CD8-positive, alpha-beta T cell (primary cell): ENCODE measurements at regions of chr7 and their contacts with region 1.

Region 1: GRCh38 chr7:121366852-121367431 is 29.2 kb downstream of the FAM3C start:
- DNase-seq: peak in 3 of 9 experiments; percentile 24 to 70 (median 64)
- ATAC-seq: peak; percentile 57
- H3K4me3 ChIP-seq: no peak overlapping the region
- H3K4me3 Mint-ChIP-seq: no peak overlapping the region
- H3K27ac ChIP-seq: no peak overlapping the region
- H3K27ac Mint-ChIP-seq: peak overlapping the region; percentile 41
- H3K4me1 ChIP-seq: no peaks in the 10 kb centered on the region
- H3K4me1 Mint-ChIP-seq: peaks cover 22% of the 10 kb centered on the region
- H3K27me3 ChIP-seq: no peaks in the 10 kb centered on the region
- H3K27me3 Mint-ChIP-seq: no peaks in the 10 kb centered on the region
- CTCF ChIP-seq: peak; percentile 84

Region 2: DNA sequence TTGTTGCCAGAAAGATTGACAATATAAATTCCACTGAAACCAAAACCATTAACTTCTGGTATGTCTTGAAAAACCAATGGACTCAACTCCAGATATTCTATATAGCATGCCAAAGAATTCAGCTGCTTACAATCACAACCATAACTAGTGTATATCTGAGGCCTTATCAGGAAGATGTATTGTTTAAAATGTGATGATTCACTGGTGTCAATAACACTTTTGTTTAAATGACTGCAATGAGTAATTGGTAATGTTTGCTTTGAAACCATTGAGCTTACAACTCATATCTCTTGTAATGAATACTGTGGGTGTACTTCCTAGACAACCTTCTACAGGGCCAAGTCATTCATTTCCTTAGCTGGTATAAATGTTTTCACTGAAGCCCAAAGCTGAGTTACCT is 1821.8 kb before region 1 on chr7:
- CTCF ChIA-PET with region 1: no interaction called
- POLR2A ChIA-PET with region 1: no interaction called
- intact Hi-C with region 1: no loop called
- DNase-seq: no peak
- ATAC-seq: no peak
- H3K4me3 ChIP-seq: no peak overlapping the region
- H3K4me3 Mint-ChIP-seq: no peak overlapping the region
- H3K27ac ChIP-seq: no peak overlapping the region
- H3K27ac Mint-ChIP-seq: no peak overlapping the region
- H3K4me1 ChIP-seq: no peaks in the 10 kb centered on the region
- H3K4me1 Mint-ChIP-seq: no peaks in the 10 kb centered on the region
- H3K27me3 ChIP-seq: no peaks in the 10 kb centered on the region
- H3K27me3 Mint-ChIP-seq: no peaks in the 10 kb centered on the region
- CTCF ChIP-seq: no peak

Region 3: DNA sequence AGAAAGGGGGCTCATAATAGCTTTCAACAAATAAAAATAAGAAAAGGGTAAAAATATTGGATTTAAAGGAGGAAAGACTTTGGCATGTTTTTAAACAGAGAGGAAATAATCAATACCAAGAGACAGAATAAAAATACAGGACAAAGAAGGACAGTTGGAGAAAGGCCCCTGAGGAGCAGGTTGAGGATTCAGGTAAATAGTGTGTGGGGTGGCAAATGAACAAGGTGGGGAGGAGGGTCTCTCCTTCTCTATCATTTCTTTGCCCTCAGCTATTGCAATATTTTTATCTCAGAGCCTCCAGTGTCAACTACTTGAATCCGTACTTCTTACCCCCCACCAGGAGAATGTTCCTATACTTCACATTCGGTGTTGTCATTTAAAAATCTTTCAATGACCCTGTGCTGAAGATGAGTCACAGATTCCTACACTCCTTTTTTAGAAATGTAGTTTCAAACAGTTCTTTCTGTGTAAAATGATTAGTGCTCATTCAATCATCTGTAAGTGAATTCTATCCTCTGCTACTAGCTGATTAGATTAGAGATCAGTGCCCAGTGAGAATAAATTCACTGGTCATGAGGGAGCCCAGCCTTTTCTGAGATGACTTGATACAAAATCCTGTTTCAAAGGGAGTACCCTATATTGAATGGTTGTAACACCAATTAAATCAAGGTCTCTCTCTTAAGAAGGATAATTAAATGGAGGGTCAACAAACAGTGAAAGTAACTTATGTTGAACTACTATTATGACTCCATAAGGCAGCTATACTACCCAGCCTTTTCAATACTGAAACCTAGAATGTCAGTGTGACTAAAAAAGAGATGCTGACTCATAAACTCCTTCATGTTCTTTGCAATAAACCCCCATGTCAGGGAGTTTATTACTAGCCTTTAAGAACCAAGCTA is 88.6 kb before region 1 on chr7:
- CTCF ChIA-PET with region 1: no interaction called
- POLR2A ChIA-PET with region 1: no interaction called
- intact Hi-C with region 1: no loop called
- DNase-seq: no peak
- ATAC-seq: no peak
- H3K4me3 ChIP-seq: no peak overlapping the region
- H3K4me3 Mint-ChIP-seq: no peak overlapping the region
- H3K27ac ChIP-seq: no peak overlapping the region
- H3K27ac Mint-ChIP-seq: no peak overlapping the region
- H3K4me1 ChIP-seq: no peaks in the 10 kb centered on the region
- H3K4me1 Mint-ChIP-seq: no peaks in the 10 kb centered on the region
- H3K27me3 ChIP-seq: no peaks in the 10 kb centered on the region
- H3K27me3 Mint-ChIP-seq: peaks cover 12% of the 10 kb centered on the region
- CTCF ChIP-seq: no peak

Region 4: GRCh38 chr7:121379930-121380329 is 13.0 kb after region 1 on chr7:
- CTCF ChIA-PET with region 1: interaction called, 12 read pairs
- POLR2A ChIA-PET with region 1: interaction called, 5 read pairs
- intact Hi-C with region 1: loop called in 1 of 2 experiments (anchors 2 kb)
- DNase-seq: no peak
- ATAC-seq: no peak
- H3K4me3 ChIP-seq: no peak overlapping the region
- H3K4me3 Mint-ChIP-seq: no peak overlapping the region
- H3K27ac ChIP-seq: no peak overlapping the region
- H3K27ac Mint-ChIP-seq: no peak overlapping the region
- H3K4me1 ChIP-seq: peaks cover 16% of the 10 kb centered on the region
- H3K4me1 Mint-ChIP-seq: peaks cover 28% of the 10 kb centered on the region
- H3K27me3 ChIP-seq: no peaks in the 10 kb centered on the region
- H3K27me3 Mint-ChIP-seq: no peaks in the 10 kb centered on the region
- CTCF ChIP-seq: no peak

Region 5: GRCh38 chr7:121395961-121396757 is 29.2 kb after region 1 on chr7 and contains the start of gene FAM3C:
- CTCF ChIA-PET with region 1: interaction called, 41 read pairs
- POLR2A ChIA-PET with region 1: interaction called, 4 read pairs
- intact Hi-C with region 1: loop called (anchors 1 to 2 kb)
- DNase-seq: peak; percentile 52 to 89 (median 73)
- ATAC-seq: peak; percentile 76
- H3K4me3 ChIP-seq: peak within 1 kb of the TSS; percentile 55 to 78
- H3K4me3 Mint-ChIP-seq: peak within 1 kb of the TSS; percentile 88
- H3K27ac ChIP-seq: peak within 1 kb of the TSS; percentile 59 to 61
- H3K27ac Mint-ChIP-seq: peak within 1 kb of the TSS; percentile 88
- H3K4me1 ChIP-seq: peaks cover 16% of the 10 kb centered on the region
- H3K4me1 Mint-ChIP-seq: peaks cover 37% of the 10 kb centered on the region
- H3K27me3 ChIP-seq: no peaks in the 10 kb centered on the region
- H3K27me3 Mint-ChIP-seq: no peaks in the 10 kb centered on the region
- CTCF ChIP-seq: peak; percentile 83
- total RNA-seq, gene FAM3C: 11.7 to 11.9 TPM

Region 6: DNA sequence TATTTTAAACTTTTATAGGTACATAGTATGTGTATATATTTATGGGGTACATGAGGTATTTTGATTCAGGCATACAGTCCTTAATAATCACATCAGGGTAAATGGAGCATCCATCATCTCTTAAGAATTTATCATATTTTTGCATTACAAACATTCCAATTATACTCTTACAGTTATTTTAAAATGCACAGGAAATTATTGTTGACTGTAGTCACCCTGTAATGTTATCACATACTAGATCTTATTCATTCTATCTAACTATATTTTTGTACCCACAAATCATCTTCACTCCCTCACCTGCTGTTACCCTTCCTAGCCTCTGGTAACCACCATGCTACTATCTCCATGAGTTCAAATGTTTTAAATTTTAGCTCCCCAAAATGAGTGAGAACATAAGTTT is 85.4 kb after region 1 on chr7:
- CTCF ChIA-PET with region 1: no interaction called
- POLR2A ChIA-PET with region 1: no interaction called
- intact Hi-C with region 1: no loop called
- DNase-seq: no peak
- ATAC-seq: no peak
- H3K4me3 ChIP-seq: no peak overlapping the region
- H3K4me3 Mint-ChIP-seq: no peak overlapping the region
- H3K27ac ChIP-seq: no peak overlapping the region
- H3K27ac Mint-ChIP-seq: no peak overlapping the region
- H3K4me1 ChIP-seq: no peaks in the 10 kb centered on the region
- H3K4me1 Mint-ChIP-seq: no peaks in the 10 kb centered on the region
- H3K27me3 ChIP-seq: no peaks in the 10 kb centered on the region
- H3K27me3 Mint-ChIP-seq: no peaks in the 10 kb centered on the region
- CTCF ChIP-seq: no peak

Region 7: GRCh38 chr7:121504478-121504877 is 137.5 kb after region 1 on chr7:
- CTCF ChIA-PET with region 1: interaction called, 35 read pairs
- POLR2A ChIA-PET with region 1: no interaction called
- intact Hi-C with region 1: loop called in 1 of 2 experiments (anchors 1 kb)
- DNase-seq: no peak
- ATAC-seq: no peak
- H3K4me3 ChIP-seq: no peak overlapping the region
- H3K4me3 Mint-ChIP-seq: no peak overlapping the region
- H3K27ac ChIP-seq: no peak overlapping the region
- H3K27ac Mint-ChIP-seq: no peak overlapping the region
- H3K4me1 ChIP-seq: no peaks in the 10 kb centered on the region
- H3K4me1 Mint-ChIP-seq: no peaks in the 10 kb centered on the region
- H3K27me3 ChIP-seq: no peaks in the 10 kb centered on the region
- H3K27me3 Mint-ChIP-seq: no peaks in the 10 kb centered on the region
- CTCF ChIP-seq: no peak

Region 8: DNA sequence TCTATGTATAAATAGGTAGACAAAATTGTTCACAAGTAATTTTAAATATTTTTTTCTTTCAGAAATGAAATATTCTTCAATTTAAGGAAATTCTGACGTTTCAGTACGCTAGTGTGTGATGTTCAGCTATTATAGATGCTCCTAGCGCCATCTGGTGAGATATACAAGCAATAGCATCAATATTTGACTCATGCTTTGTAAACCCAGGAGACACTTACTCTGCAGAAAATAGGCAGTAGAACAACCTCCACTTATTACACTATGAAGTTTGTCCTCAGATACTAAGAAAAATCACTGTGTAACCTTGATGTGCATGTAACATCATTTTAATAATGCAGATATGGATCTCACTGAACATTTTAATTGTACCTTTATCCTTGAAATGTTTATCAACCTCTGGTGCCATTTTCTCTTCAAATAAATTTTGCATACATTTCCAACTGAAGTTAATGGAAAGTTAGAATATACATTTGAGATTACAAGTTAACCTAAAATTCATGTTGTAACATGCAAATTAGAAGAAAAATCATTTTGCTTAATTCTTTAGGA is 180.7 kb after region 1 on chr7:
- CTCF ChIA-PET with region 1: interaction called, 79 read pairs
- POLR2A ChIA-PET with region 1: interaction called, 3 read pairs
- intact Hi-C with region 1: loop called (anchors 1 kb)
- DNase-seq: peak in 2 of 9 experiments; percentile 67 to 75
- ATAC-seq: peak; percentile 85
- H3K4me3 ChIP-seq: no peak overlapping the region
- H3K4me3 Mint-ChIP-seq: no peak overlapping the region
- H3K27ac ChIP-seq: no peak overlapping the region
- H3K27ac Mint-ChIP-seq: no peak overlapping the region
- H3K4me1 ChIP-seq: no peaks in the 10 kb centered on the region
- H3K4me1 Mint-ChIP-seq: peaks cover 7% of the 10 kb centered on the region
- H3K27me3 ChIP-seq: no peaks in the 10 kb centered on the region
- H3K27me3 Mint-ChIP-seq: no peaks in the 10 kb centered on the region
- CTCF ChIP-seq: peak; percentile 85

Region 9: GRCh38 chr7:121605317-121605680 is 238.4 kb after region 1 on chr7:
- CTCF ChIA-PET with region 1: no interaction called
- POLR2A ChIA-PET with region 1: no interaction called
- intact Hi-C with region 1: no loop called
- DNase-seq: no peak
- ATAC-seq: no peak
- H3K4me3 ChIP-seq: no peak overlapping the region
- H3K4me3 Mint-ChIP-seq: no peak overlapping the region
- H3K27ac ChIP-seq: no peak overlapping the region
- H3K27ac Mint-ChIP-seq: no peak overlapping the region
- H3K4me1 ChIP-seq: no peaks in the 10 kb centered on the region
- H3K4me1 Mint-ChIP-seq: no peaks in the 10 kb centered on the region
- H3K27me3 ChIP-seq: no peaks in the 10 kb centered on the region
- H3K27me3 Mint-ChIP-seq: peaks cover 2% of the 10 kb centered on the region
- CTCF ChIP-seq: no peak